HepG2 (cell line): ENCODE measurements at regions of chr1 and their contacts with region 1.

Region 1: GRCh38 chr1:94247138-94248094 is 10.0 kb upstream of the ARHGAP29 start:
- DNase-seq: peak; percentile 57
- ATAC-seq: peak; percentile 94
- H3K4me3 ChIP-seq: peak overlapping the region; percentile 73 to 86 (median 74)
- H3K27ac ChIP-seq: peak overlapping the region; percentile 32
- H3K4me1 ChIP-seq: peaks cover 42% of the 10 kb centered on the region
- H3K27me3 ChIP-seq: peaks cover 0 to 1% of the 10 kb centered on the region in 2 experiments; a peak in 3 of 5 replicates
- CTCF ChIP-seq: no peak; the same call in 1 of the 2 replicates
- EP300 ChIP-seq: no peak
- POLR2A ChIP-seq: peak in 1 of 2 experiments; percentile 48; a peak in 3 of 4 replicates
- RAD21 ChIP-seq: no peak; the same call in 1 of the 2 replicates

Region 2: DNA sequence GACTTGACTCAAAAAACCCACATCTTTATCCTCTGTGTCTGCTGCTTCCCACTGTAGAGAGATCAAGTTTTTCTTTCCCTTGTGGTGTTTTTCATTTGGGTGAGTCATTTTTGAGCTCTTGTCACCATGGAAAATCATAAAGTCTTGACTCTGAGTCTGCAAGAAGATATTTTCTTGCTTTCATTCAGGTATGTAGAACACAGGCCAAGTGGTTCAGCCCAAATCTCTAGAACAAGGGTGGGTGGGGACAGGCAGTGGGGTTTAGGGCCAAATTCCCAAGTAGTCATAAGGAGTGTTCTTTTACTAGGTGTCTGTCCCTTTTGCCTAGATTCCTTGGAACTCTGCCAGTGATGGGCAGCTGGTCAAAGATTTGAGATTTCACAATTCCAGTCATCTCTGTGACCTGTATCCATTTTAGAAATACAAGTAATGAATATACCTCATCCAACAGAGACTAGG is 11.5 kb after region 1 on chr1:
- CTCF ChIA-PET with region 1: no interaction called
- POLR2A ChIA-PET with region 1: interaction called, 10 read pairs
- in situ Hi-C with region 1: no loop called
- intact Hi-C with region 1: no loop called
- DNase-seq: peak; percentile 52
- ATAC-seq: no peak
- H3K4me3 ChIP-seq: no peak overlapping the region
- H3K27ac ChIP-seq: no peak overlapping the region
- H3K4me1 ChIP-seq: peaks cover 22% of the 10 kb centered on the region
- H3K27me3 ChIP-seq: no peaks in the 10 kb centered on the region
- CTCF ChIP-seq: no peak
- EP300 ChIP-seq: no peak
- POLR2A ChIP-seq: no peak
- RAD21 ChIP-seq: no peak

Region 3: GRCh38 chr1:94316836-94317789 is 69.7 kb after region 1 on chr1:
- CTCF ChIA-PET with region 1: no interaction called
- POLR2A ChIA-PET with region 1: interaction called, 4 read pairs
- in situ Hi-C with region 1: loop called (anchors 5 kb)
- intact Hi-C with region 1: loop called (anchors 5 kb)
- DNase-seq: peak; percentile 83
- ATAC-seq: peak; percentile 88
- H3K4me3 ChIP-seq: peak overlapping the region in 2 of 3 experiments; percentile 27; a peak in 3 of 6 replicates
- H3K27ac ChIP-seq: peak overlapping the region; percentile 60
- H3K4me1 ChIP-seq: peaks cover 82% of the 10 kb centered on the region
- H3K27me3 ChIP-seq: no peaks in the 10 kb centered on the region
- CTCF ChIP-seq: no peak
- EP300 ChIP-seq: no peak
- POLR2A ChIP-seq: no peak
- RAD21 ChIP-seq: no peak

Region 4: DNA sequence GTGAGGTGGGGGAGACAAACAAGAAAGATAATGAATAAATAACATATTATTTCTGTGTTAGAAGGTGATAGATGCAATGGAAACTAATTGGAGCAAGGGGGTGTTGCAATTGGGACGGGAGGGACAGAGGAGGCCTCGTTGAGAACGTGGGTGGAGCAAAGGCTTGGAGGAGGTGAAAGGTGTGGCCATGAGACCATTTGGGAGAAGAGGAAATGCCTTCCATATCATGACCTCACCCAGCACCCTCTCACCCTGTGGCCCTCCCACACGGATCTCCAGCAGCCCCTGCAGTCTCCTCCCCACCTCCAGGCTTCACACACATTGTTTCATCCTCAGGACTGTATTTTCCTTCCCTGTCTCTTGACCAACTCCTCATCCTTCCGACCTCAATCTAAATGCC is 75.3 kb after region 1 on chr1:
- CTCF ChIA-PET with region 1: no interaction called
- POLR2A ChIA-PET with region 1: interaction called, 4 read pairs
- in situ Hi-C with region 1: loop called (anchors 5 kb)
- intact Hi-C with region 1: loop called (anchors 5 kb)
- DNase-seq: no peak
- ATAC-seq: no peak
- H3K4me3 ChIP-seq: no peak overlapping the region
- H3K27ac ChIP-seq: no peak overlapping the region
- H3K4me1 ChIP-seq: peaks cover 66% of the 10 kb centered on the region
- H3K27me3 ChIP-seq: no peaks in the 10 kb centered on the region
- CTCF ChIP-seq: no peak
- EP300 ChIP-seq: no peak
- POLR2A ChIP-seq: no peak
- RAD21 ChIP-seq: no peak

Region 5: GRCh38 chr1:94329986-94330385 is 82.6 kb after region 1 on chr1:
- CTCF ChIA-PET with region 1: no interaction called
- POLR2A ChIA-PET with region 1: interaction called, 5 read pairs
- in situ Hi-C with region 1: no loop called
- intact Hi-C with region 1: loop called (anchors 1 kb)
- DNase-seq: peak; percentile 67
- ATAC-seq: peak; percentile 90
- H3K4me3 ChIP-seq: peak overlapping the region in 2 of 3 experiments; percentile 22 to 26; a peak in 2 of 6 replicates
- H3K27ac ChIP-seq: no peak overlapping the region
- H3K4me1 ChIP-seq: peaks cover 59% of the 10 kb centered on the region
- H3K27me3 ChIP-seq: no peaks in the 10 kb centered on the region
- CTCF ChIP-seq: peak; percentile 82
- EP300 ChIP-seq: no peak
- POLR2A ChIP-seq: no peak
- RAD21 ChIP-seq: peak; percentile 61; the same call in 1 of the 2 replicates